MCF 10A (cell line): ENCODE measurements at regions of chr2 and their contacts with region 1.

Region 1: GRCh38 chr2:120252225-120253021 is at the start of gene RALB:
- DNase-seq: peak; percentile 98
- H3K4me3 Mint-ChIP-seq: peak within 1 kb of the TSS; percentile 96
- H3K27ac Mint-ChIP-seq: peak within 1 kb of the TSS; percentile 88
- H3K4me1 Mint-ChIP-seq: peaks cover 38% of the 10 kb centered on the region
- H3K27me3 Mint-ChIP-seq: peaks cover 29% of the 10 kb centered on the region
- CTCF ChIP-seq: no peak
- total RNA-seq, gene RALB: 37.4 and 46.5 TPM in 2 replicates

Region 2: DNA sequence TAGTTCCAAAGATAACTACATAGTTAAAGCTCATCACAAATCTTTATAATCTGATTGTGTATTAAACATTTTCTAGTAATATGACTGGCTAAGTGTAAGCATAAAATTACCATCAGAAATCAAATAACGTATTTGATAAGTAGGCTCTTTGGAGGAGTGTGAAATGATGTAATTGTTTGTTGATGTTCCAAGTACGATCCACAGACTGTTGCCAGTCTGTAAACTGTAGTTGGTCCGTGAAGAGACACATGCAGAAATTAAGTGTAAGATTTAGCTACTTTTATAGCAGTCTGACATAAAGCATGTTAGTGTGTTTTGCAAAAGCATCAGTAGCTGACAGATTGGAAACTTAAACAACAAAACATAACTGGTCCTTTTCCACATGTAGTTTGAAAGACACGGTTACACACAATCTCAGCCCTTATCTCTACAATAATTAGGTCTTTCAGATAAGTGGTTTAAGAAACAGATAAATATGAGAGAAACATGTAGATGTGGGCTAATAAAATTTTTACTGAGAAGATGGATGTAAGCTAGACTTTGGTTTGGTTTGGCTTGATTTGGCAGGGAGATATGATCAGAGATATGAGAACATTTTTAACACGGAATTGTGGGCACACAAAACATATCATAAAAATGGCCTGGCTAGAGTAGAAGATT is 354.6 kb before region 1 on chr2:
- CTCF ChIA-PET with region 1: no interaction called
- POLR2A ChIA-PET with region 1: no interaction called
- intact Hi-C with region 1: no loop called
- DNase-seq: no peak
- H3K4me3 Mint-ChIP-seq: no peak overlapping the region
- H3K27ac Mint-ChIP-seq: no peak overlapping the region
- H3K4me1 Mint-ChIP-seq: no peaks in the 10 kb centered on the region
- H3K27me3 Mint-ChIP-seq: no peaks in the 10 kb centered on the region
- CTCF ChIP-seq: no peak

Region 3: GRCh38 chr2:120239488-120240287 is 12.7 kb before region 1 on chr2:
- CTCF ChIA-PET with region 1: interaction called, 3 read pairs
- POLR2A ChIA-PET with region 1: interaction called, 10 read pairs
- intact Hi-C with region 1: no loop called
- DNase-seq: peak; percentile 56
- H3K4me3 Mint-ChIP-seq: no peak overlapping the region
- H3K27ac Mint-ChIP-seq: no peak overlapping the region
- H3K4me1 Mint-ChIP-seq: peaks cover 9% of the 10 kb centered on the region
- H3K27me3 Mint-ChIP-seq: no peaks in the 10 kb centered on the region
- CTCF ChIP-seq: no peak

Region 4: DNA sequence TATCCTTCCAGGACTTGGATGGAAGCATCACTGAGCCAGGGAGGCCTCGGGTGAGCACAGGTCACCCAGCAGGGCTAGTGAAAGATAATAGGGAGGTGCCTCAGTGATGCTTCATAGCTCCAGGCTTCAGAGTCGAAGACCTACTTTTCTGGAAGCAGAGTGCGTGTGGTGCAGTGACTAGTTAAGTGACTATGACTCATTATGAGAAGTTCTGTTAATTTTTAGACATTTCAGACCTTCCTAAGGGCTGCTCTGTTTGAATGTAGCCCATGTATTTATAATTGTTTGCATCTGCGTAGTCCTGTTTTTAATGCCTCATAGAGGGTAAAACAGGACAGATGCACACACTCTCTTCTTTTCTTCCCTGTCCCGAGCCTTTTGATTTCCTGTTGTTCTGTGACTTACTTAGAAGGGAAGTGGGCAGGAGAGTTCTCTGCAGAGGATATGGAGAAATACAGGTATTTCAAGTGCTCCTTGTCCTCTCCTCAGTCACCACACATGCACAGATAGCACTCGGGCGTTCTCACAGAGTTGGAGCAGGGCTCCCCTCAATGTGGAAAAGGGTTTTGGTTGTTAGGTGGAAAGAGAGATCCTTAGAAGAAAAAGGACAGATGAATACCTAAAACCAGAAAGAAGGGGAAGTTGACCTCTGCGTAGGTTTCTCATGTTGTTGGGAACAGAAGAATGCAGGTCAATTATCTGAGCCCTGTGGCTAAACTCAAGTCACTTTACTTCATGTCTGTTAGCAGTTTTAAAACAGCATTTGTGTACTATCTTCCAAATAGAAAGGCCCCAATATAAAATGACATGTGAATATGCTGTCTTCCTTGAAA is 35.0 kb after region 1 on chr2:
- CTCF ChIA-PET with region 1: interaction called, 3 read pairs
- POLR2A ChIA-PET with region 1: interaction called, 3 read pairs
- intact Hi-C with region 1: loop called (anchors 2 kb)
- DNase-seq: peak; percentile 53
- H3K4me3 Mint-ChIP-seq: no peak overlapping the region
- H3K27ac Mint-ChIP-seq: no peak overlapping the region
- H3K4me1 Mint-ChIP-seq: peaks cover 20% of the 10 kb centered on the region
- H3K27me3 Mint-ChIP-seq: no peaks in the 10 kb centered on the region
- CTCF ChIP-seq: no peak